CD4-positive, alpha-beta T cell (primary cell): ENCODE measurements at regions of chr5 and their contacts with region 1.

Region 1: DNA sequence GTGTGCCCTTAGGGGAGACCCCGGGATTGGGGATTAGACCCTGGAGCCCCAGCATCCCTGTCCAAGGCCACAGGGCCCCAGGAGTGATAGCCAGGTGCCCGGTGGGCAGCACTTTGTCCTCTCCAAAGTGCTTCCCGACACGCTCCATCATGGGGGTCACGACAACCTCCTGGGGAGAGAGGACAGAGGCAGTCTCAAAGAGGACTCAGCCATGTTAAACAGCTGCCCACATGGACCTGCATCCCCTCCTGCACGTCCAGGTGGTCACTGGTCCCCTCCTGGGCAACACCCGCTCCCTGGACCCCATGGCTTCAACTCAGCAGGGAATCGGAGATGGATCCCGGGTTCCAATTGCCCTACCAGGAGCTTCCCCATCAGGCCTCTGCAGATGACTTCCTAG is 20.1 kb upstream of the HNRNPH1 start:
- DNase-seq: no peak
- ATAC-seq: no peak
- H3K4me3 ChIP-seq: no peak overlapping the region
- H3K4me3 Mint-ChIP-seq: no peak overlapping the region
- H3K27ac ChIP-seq: no peak overlapping the region
- H3K27ac Mint-ChIP-seq: no peak overlapping the region
- H3K4me1 ChIP-seq: no peaks in the 10 kb centered on the region
- H3K4me1 Mint-ChIP-seq: no peaks in the 10 kb centered on the region
- H3K27me3 ChIP-seq: no peaks in the 10 kb centered on the region
- H3K27me3 Mint-ChIP-seq: no peaks in the 10 kb centered on the region
- CTCF ChIP-seq: no peak

Region 2: DNA sequence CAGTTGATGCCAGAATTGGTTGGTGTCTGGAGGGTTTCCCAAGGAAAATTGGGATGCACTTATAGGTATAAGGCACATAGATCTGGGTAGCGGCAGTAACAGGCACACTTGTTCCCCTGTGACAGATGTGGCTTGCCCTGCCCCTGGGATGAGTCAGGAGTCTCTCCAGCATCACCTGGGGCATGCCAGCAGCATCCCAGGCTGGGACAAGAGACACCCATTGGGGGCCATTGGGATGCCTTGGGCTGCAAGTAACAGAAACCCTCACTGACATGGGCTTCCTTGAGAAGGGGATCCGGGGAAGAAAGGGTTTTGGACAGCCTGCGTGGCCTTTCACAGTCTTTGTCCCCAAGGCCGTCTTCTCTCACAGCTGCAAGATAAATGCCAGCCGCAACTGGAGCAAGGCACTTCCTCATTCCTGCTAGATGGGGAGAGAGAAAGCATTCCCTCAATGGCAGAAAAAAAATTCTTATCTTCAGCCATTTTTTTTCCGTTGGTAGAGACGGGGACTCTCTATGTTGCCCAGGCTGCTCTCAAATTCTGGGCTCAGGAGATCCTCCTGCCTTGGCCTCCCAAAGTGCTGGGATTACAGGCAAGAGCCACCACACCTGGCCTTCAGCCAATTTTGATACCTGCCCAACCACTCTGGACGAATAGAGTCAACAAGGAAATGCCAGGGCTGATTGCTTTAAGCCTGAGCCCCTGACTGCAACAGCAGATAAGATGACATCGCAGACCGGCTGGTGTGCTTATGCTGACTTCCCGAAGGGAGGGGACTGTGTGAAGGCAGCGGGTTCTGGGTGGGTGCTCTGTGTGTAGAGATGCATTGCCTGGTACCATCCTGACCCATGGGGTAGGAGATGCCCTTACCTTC is 441.4 kb after region 1 on chr5:
- CTCF ChIA-PET with region 1: no interaction called
- POLR2A ChIA-PET with region 1: no interaction called
- intact Hi-C with region 1: loop called in 1 of 2 experiments (anchors 10 kb)
- DNase-seq: no peak
- ATAC-seq: peak; percentile 40
- H3K4me3 ChIP-seq: no peak overlapping the region
- H3K4me3 Mint-ChIP-seq: no peak overlapping the region
- H3K27ac ChIP-seq: no peak overlapping the region
- H3K27ac Mint-ChIP-seq: peak overlapping the region; percentile 79
- H3K4me1 ChIP-seq: peaks cover 12% of the 10 kb centered on the region
- H3K4me1 Mint-ChIP-seq: peaks cover 24% of the 10 kb centered on the region
- H3K27me3 ChIP-seq: peaks cover 18% of the 10 kb centered on the region in 2 experiments
- H3K27me3 Mint-ChIP-seq: peaks cover 46% of the 10 kb centered on the region
- CTCF ChIP-seq: no peak